ENCODE measurements at regions of chrX and their contacts with region 1.

Region 1: GRCh38 chrX:120653000-120653399 is 23.1 kb upstream of the C1GALT1C1 start:
- DNase-seq: no peak
- H3K4me3 ChIP-seq: no peak overlapping the region
- H3K27ac ChIP-seq: no peak overlapping the region
- H3K4me1 ChIP-seq: no peaks in the 10 kb centered on the region
- H3K27me3 ChIP-seq: no peaks in the 10 kb centered on the region
- CTCF ChIP-seq: no peak

Region 2: DNA sequence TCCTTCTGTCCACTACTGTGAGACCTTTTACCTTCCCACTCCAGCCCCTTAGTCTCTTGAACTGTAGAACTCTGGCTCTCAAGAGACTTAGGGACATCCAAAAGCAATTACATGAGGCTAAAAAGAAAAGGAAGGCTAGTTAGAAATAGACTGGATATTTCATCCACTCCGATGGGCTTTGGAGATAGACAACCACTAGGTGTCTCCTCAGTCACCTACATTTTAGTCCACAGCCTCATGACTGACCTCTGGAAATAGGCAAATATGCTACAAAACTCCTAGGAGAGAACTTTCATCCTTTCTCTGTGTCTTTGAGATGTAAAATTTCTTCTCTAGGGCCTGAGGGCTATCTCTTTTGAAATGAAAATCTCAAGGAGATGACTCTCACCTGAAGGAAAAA is 138.8 kb before region 1 on chrX:
- CTCF ChIA-PET with region 1: no interaction called
- dilution Hi-C with region 1: no loop called
- in situ Hi-C with region 1: loop called in 1 of 2 experiments (anchors 10 kb)
- intact Hi-C with region 1: loop called (anchors 2 kb)
- DNase-seq: peak; percentile 19
- H3K4me3 ChIP-seq: no peak overlapping the region
- H3K27ac ChIP-seq: no peak overlapping the region
- H3K4me1 ChIP-seq: no peaks in the 10 kb centered on the region
- H3K27me3 ChIP-seq: no peaks in the 10 kb centered on the region
- CTCF ChIP-seq: peak; percentile 52 to 68

Region 3: DNA sequence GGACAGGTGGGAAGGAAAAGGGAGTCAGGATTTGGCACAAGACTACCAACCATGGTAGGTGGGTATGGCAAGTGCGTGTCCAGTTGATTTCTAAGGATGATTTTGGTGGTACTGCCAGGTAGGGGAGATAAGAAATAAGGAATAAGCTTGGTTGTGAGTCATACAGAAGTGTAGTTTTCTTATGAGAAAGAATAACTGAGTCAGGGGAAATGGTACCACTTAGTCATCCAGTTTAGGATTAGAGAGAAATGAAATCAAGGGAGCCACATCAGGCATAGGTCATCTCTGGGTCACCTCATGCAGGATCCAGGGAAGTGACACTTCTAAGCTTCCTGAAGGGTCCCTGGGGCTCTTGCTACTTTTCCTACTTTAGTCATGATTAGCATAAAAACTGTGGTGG is 84.0 kb after region 1 on chrX:
- CTCF ChIA-PET with region 1: no interaction called
- dilution Hi-C with region 1: no loop called
- in situ Hi-C with region 1: no loop called
- intact Hi-C with region 1: no loop called
- DNase-seq: peak; percentile 55
- H3K4me3 ChIP-seq: no peak overlapping the region
- H3K27ac ChIP-seq: no peak overlapping the region
- H3K4me1 ChIP-seq: peaks cover 15% of the 10 kb centered on the region
- H3K27me3 ChIP-seq: no peaks in the 10 kb centered on the region
- CTCF ChIP-seq: no peak

Region 4: DNA sequence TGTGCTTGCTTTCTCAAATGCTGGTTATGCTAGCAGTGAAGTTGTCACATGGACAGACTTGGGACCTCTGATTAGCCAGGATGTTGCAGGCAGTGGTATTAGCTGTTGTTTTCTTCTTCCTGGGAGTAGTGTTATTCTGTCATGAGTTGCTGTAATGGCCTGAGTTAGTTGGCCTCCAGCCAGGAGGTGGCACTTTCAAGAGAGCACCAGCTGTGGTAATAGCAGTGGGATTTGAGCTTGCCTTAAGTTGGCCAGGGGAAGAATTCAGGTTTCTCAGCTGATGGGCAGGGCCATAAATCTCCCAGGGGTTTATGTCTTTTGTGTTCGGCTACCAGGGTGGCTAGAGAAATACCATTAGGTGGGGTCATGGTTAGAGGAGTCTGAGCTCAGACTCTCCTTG is 527.0 kb after region 1 on chrX:
- CTCF ChIA-PET with region 1: no interaction called
- dilution Hi-C with region 1: no loop called
- in situ Hi-C with region 1: no loop called
- intact Hi-C with region 1: no loop called
- DNase-seq: no peak
- H3K4me3 ChIP-seq: no peak overlapping the region
- H3K27ac ChIP-seq: no peak overlapping the region
- H3K4me1 ChIP-seq: no peaks in the 10 kb centered on the region
- H3K27me3 ChIP-seq: no peaks in the 10 kb centered on the region
- CTCF ChIP-seq: no peak

Measured in mammary epithelial cell (primary cell).